ENCODE measurements at regions of chr4 and their contacts with region 1.

Region 1: GRCh38 chr4:159446266-159446976 is 343.5 kb downstream of the RAPGEF2 start:
- DNase-seq: peak; percentile 40 to 63
- H3K4me3 ChIP-seq: no peak overlapping the region
- H3K27ac ChIP-seq: peak overlapping the region in 1 of 2 donors; percentile 40
- H3K4me1 ChIP-seq: peaks cover 0 to 25% (median 0%) of the 10 kb centered on the region in 4 donors
- H3K27me3 ChIP-seq: no peaks in the 10 kb centered on the region
- CTCF ChIP-seq: peak; percentile 85 to 89

Region 2: DNA sequence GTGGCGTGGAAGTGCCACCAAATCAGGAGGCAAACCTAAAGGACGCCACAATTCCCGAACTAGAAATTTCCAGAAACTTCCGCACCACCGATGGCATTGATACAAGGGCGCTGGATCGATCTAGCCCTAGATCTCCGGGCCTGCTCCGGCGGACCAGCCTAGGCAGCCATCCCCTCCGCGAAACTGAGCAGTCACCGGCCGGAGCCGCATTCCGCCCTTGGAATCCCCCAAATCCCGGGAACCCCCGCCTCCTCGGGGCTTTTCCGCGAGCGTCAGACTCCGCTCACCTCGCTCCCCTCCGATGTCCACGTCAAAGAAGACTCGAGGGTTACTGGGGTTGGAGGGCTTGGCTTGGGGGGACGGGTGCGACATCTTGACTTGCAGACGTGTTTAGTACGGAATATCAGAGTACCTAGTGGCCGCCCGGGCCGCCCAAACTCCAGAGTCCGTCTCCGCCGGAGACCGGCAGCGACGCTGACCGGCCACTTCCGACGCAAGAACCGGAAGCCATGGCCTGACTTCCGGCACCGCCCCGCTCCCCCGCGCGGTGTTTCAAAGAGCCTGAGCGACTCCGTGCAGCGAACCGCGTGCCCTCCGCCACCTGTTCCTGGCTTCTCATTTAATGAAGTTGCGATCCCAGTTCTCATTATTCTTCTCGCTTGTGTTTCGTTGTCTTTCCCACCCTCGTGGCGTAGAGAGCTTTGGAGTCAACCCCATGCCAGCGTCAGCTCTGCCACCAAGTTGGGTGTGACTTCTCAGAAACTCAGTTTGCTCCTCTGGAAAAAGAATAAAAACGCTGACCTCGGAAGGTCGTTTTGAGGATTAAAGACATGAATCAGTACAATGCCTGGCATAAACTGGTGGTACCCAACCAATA is 723.3 kb before region 1 on chr4 and contains the start of gene PPID:
- intact Hi-C with region 1: loop called (anchors 10 kb)
- DNase-seq: peak; percentile 80 to 89
- H3K4me3 ChIP-seq: peak within 1 kb of the TSS; percentile 86
- H3K27ac ChIP-seq: peak within 1 kb of the TSS; percentile 90 to 93
- H3K4me1 ChIP-seq: peaks cover 0 to 18% (median 8%) of the 10 kb centered on the region in 4 donors
- H3K27me3 ChIP-seq: no peaks in the 10 kb centered on the region
- CTCF ChIP-seq: peak in 1 of 2 experiments; percentile 5

Region 3: GRCh38 chr4:159086611-159087010 is 359.8 kb before region 1 on chr4:
- intact Hi-C with region 1: no loop called
- DNase-seq: no peak
- H3K4me3 ChIP-seq: no peak overlapping the region
- H3K27ac ChIP-seq: no peak overlapping the region
- H3K4me1 ChIP-seq: no peaks in the 10 kb centered on the region
- H3K27me3 ChIP-seq: no peaks in the 10 kb centered on the region
- CTCF ChIP-seq: no peak

Region 4: GRCh38 chr4:159175085-159175988 is 271.1 kb before region 1 on chr4:
- intact Hi-C with region 1: no loop called
- DNase-seq: peak; percentile 68 to 70
- H3K4me3 ChIP-seq: no peak overlapping the region
- H3K27ac ChIP-seq: peak overlapping the region in 1 of 2 donors; percentile 7
- H3K4me1 ChIP-seq: peaks cover 0 to 85% (median 35%) of the 10 kb centered on the region in 4 donors
- H3K27me3 ChIP-seq: no peaks in the 10 kb centered on the region
- CTCF ChIP-seq: peak; percentile 79 to 80

Region 5: DNA sequence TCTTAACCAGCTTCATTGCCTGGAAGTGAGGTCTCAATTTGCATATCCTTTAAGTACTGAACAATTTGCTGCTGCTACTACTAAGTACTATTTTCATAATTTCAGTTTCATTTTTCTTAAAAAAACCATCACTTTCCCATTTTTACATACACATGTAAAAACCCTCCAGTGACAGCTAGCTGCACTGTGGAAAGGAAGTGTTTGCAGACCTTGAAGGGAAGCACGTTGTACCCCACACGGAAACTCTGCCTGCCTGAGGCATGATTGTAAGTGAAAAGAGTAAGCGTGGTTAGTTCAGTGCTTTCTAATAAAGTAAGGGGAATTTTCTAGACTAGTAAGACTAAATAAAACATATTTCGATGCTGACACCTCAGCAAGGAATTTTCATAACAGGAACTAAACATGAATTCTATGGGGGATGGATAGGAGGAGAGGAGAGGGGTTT is 240.0 kb before region 1 on chr4:
- intact Hi-C with region 1: loop called (anchors 10 kb)
- DNase-seq: no peak
- H3K4me3 ChIP-seq: no peak overlapping the region
- H3K27ac ChIP-seq: peak overlapping the region; percentile 14 to 18
- H3K4me1 ChIP-seq: peaks cover 0 to 42% (median 9%) of the 10 kb centered on the region in 4 donors
- H3K27me3 ChIP-seq: no peaks in the 10 kb centered on the region
- CTCF ChIP-seq: no peak

Region 6: DNA sequence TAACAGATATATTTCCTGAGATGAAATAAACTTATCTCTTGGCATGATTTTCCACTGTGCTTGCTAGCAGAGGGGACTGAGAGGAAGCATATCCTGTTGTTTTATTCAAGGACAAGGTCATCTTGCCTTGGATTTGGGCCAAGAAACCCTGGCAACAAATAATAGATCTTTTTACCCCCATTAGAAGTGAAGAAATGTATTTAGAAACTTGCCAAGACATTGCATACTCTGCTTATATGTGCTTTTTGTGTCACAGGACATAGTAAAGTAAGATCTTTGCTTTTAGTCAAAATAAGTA is 173.3 kb before region 1 on chr4:
- intact Hi-C with region 1: no loop called
- DNase-seq: no peak
- H3K4me3 ChIP-seq: no peak overlapping the region
- H3K27ac ChIP-seq: peak overlapping the region; percentile 3 to 20
- H3K4me1 ChIP-seq: peaks cover 0 to 57% (median 17%) of the 10 kb centered on the region in 4 donors
- H3K27me3 ChIP-seq: no peaks in the 10 kb centered on the region
- CTCF ChIP-seq: no peak

Measured in tibial artery (tissue), 4 donors.